ENCODE measurements at regions of chr6 and their contacts with region 1.

Region 1: DNA sequence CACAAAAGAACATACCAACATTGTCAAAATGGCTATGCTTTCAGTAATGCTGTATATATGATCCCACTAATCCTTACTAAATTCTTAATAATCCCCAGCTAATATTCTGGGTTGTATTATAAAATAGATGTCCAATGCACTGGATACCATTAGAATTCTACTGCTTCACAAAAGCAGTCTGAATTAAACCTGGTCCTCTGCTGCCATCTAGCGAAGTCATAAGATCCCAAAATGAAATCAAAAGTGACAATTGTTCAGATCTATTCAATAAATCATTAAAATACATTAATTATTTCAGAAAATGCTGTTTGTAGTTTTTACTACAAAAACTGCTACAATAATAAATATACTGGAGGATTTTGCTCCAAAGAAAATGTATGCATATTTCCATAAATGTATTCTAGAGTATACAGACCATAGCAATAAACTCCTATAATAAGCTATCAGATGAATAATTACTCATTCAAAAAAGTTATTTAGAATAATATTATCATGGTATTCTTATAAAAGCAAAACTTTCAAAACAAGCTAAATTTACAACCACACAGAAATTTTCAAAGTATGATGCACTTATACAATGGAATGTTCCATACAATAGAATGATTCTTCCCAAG is 92.6 kb downstream of the RNGTT start:
- DNase-seq: peak in 1 of 2 donors; percentile 80
- ATAC-seq: peak; percentile 34 to 55 (median 52)
- H3K4me3 ChIP-seq: no peak overlapping the region
- H3K4me3 Mint-ChIP-seq: no peak overlapping the region
- H3K27ac ChIP-seq: no peak overlapping the region
- H3K27ac Mint-ChIP-seq: no peak overlapping the region
- H3K4me1 ChIP-seq: no peaks in the 10 kb centered on the region
- H3K4me1 Mint-ChIP-seq: peaks cover 0 to 11% of the 10 kb centered on the region in 2 donors
- H3K27me3 ChIP-seq: no peaks in the 10 kb centered on the region
- H3K27me3 Mint-ChIP-seq: no peaks in the 10 kb centered on the region
- CTCF ChIP-seq: peak; percentile 90

Region 2: DNA sequence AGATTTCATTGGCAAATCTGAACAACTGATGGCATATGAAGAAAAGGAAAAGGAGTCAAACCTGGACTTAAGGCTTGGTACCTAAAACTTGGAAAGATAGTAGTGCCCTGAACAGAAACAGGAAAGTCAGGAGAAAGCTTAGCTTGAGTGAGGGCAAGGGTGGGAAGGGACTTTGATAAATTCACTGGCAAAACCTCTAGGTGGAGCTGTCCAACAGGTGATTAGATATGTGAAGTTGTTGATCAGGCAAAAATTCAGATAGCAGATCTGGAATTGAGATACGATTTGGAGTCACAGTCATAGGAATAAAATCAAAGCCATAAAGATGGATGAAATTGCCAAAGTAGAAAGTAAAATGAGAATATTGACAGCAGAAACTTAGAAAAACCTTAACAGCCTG is 1731.6 kb before region 1 on chr6:
- intact Hi-C with region 1: loop called (anchors 5 kb)
- DNase-seq: peak in 1 of 2 donors; percentile 84
- ATAC-seq: peak; percentile 77 to 89 (median 89)
- H3K4me3 ChIP-seq: no peak overlapping the region
- H3K4me3 Mint-ChIP-seq: no peak overlapping the region
- H3K27ac ChIP-seq: no peak overlapping the region
- H3K27ac Mint-ChIP-seq: no peak overlapping the region
- H3K4me1 ChIP-seq: no peaks in the 10 kb centered on the region
- H3K4me1 Mint-ChIP-seq: peaks cover 0 to 5% of the 10 kb centered on the region in 2 donors
- H3K27me3 ChIP-seq: peaks cover 2% of the 10 kb centered on the region
- H3K27me3 Mint-ChIP-seq: peaks cover 26 to 40% of the 10 kb centered on the region in 2 donors
- CTCF ChIP-seq: peak; percentile 88

Region 3: DNA sequence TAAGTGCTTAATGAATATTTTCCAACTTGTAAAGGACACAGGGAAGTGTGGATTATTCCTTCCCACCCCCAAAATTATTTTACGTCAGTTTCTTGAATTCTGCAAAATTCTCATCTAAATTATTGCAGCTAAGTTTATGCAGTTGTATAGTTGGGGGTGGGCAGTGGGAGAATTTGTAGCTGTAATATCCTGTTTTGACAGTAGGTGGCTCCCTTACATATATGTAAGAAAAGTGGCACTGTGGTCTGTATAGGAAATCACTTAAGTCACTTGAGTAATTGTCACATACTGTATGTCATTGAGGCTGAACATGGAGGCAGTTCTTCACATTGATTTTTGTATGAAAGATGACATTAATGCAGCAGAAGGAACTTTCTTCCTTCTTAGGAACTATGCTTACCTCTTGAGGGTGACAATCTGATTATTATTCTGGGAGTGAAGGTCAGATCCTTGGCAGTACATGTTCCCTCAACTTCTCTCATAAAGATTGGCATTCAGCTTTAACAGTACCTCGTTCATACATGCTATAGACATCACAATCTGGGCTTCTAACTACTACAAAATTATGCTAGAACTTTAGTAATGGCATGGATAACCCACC is 1477.7 kb before region 1 on chr6:
- intact Hi-C with region 1: loop called (anchors 1 kb)
- DNase-seq: peak; percentile 20 to 83
- ATAC-seq: peak; percentile 94 to 100 (median 100)
- H3K4me3 ChIP-seq: no peak overlapping the region
- H3K4me3 Mint-ChIP-seq: no peak overlapping the region
- H3K27ac ChIP-seq: no peak overlapping the region
- H3K27ac Mint-ChIP-seq: peak overlapping the region in 1 of 2 donors; percentile 45
- H3K4me1 ChIP-seq: no peaks in the 10 kb centered on the region
- H3K4me1 Mint-ChIP-seq: peaks cover 5% of the 10 kb centered on the region in 2 donors
- H3K27me3 ChIP-seq: no peaks in the 10 kb centered on the region
- H3K27me3 Mint-ChIP-seq: no peaks in the 10 kb centered on the region
- CTCF ChIP-seq: peak; percentile 72

Region 4: GRCh38 chr6:87832025-87832825 is 1038.6 kb before region 1 on chr6:
- intact Hi-C with region 1: loop called (anchors 2 kb)
- DNase-seq: peak in 1 of 2 donors; percentile 53
- ATAC-seq: peak; percentile 52 to 73 (median 67)
- H3K4me3 ChIP-seq: peak overlapping the region; percentile 47
- H3K4me3 Mint-ChIP-seq: peak overlapping the region; percentile 96
- H3K27ac ChIP-seq: peak overlapping the region; percentile 59
- H3K27ac Mint-ChIP-seq: peak overlapping the region; percentile 78 to 86
- H3K4me1 ChIP-seq: peaks cover 5% of the 10 kb centered on the region
- H3K4me1 Mint-ChIP-seq: peaks cover 0 to 10% of the 10 kb centered on the region in 2 donors
- H3K27me3 ChIP-seq: no peaks in the 10 kb centered on the region
- H3K27me3 Mint-ChIP-seq: peaks cover 4 to 9% of the 10 kb centered on the region in 2 donors
- CTCF ChIP-seq: peak; percentile 53

Region 5: GRCh38 chr6:88502391-88502790 is 368.4 kb before region 1 on chr6:
- intact Hi-C with region 1: no loop called
- DNase-seq: no peak
- ATAC-seq: no peak
- H3K4me3 ChIP-seq: no peak overlapping the region
- H3K4me3 Mint-ChIP-seq: no peak overlapping the region
- H3K27ac ChIP-seq: no peak overlapping the region
- H3K27ac Mint-ChIP-seq: no peak overlapping the region
- H3K4me1 ChIP-seq: no peaks in the 10 kb centered on the region
- H3K4me1 Mint-ChIP-seq: no peaks in the 10 kb centered on the region
- H3K27me3 ChIP-seq: no peaks in the 10 kb centered on the region
- H3K27me3 Mint-ChIP-seq: peaks cover 0 to 3% of the 10 kb centered on the region in 2 donors
- CTCF ChIP-seq: no peak

Measured in natural killer cell (primary cell).